Activated CD8-positive, alpha-beta T cell treated with anti-CD3 and anti-CD28 coated beads for 36 hours (primary cell): ENCODE measurements at regions of chr1 and their contacts with region 1.

Region 1: DNA sequence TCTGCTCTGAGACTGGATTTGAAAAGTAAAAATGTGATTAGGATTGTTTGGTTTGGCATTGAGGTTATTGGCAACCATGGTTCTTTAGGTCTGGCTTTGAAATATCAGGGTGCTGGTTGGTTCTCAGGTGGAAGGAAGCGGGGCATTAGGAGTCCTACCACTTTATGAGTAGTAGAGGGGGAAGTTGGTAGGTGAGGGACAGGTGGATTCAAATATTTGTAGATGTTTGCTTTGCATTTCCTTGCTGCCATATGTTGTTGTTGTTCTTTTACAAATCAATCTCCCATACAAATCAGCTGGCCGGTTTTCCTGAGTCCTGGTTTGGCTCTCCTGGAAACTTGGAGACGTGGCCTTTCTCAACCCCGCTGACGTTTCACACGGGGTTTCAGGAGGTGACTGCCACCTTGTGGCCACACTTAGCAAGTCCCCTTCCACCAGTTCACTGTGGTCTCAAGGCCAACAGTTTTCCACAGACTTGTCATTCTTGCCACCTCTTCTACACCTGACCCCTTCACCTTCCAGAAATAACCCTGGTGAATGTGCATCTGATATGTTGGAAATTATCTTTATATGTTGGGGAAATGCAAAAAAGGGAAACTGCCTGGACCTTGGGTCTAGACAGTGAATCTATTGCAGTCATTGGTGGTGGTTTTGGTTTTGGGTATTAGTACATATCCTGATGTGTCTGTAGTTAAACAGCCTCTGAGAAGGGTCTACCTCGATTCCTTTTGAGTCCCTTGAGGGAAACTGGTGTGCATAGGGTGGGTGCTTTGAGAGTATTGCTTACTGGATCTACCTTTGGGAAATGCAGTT is 127.0 kb upstream of the KIAA0040 start:
- DNase-seq: peak; percentile 76
- ATAC-seq: peak; percentile 90
- H3K4me3 Mint-ChIP-seq: no peak overlapping the region
- H3K27ac Mint-ChIP-seq: no peak overlapping the region
- H3K4me1 Mint-ChIP-seq: peaks cover 15% of the 10 kb centered on the region
- H3K27me3 Mint-ChIP-seq: no peaks in the 10 kb centered on the region
- CTCF ChIP-seq: peak; percentile 76

Region 2: GRCh38 chr1:175146529-175147213 is 173.0 kb before region 1 on chr1:
- CTCF ChIA-PET with region 1: interaction called, 408 read pairs
- POLR2A ChIA-PET with region 1: no interaction called
- intact Hi-C with region 1: no loop called
- DNase-seq: peak; percentile 84
- ATAC-seq: peak; percentile 96
- H3K4me3 Mint-ChIP-seq: no peak overlapping the region
- H3K27ac Mint-ChIP-seq: no peak overlapping the region
- H3K4me1 Mint-ChIP-seq: peaks cover 2% of the 10 kb centered on the region
- H3K27me3 Mint-ChIP-seq: peaks cover 13% of the 10 kb centered on the region
- CTCF ChIP-seq: peak; percentile 86

Region 3: GRCh38 chr1:175192630-175193526 is 126.7 kb before region 1 on chr1 and contains the start of gene KIAA0040:
- CTCF ChIA-PET with region 1: interaction called, 64 read pairs
- POLR2A ChIA-PET with region 1: interaction called, 3 read pairs
- intact Hi-C with region 1: no loop called
- DNase-seq: peak; percentile 66
- ATAC-seq: peak; percentile 64
- H3K4me3 Mint-ChIP-seq: peak within 1 kb of the TSS; percentile 96
- H3K27ac Mint-ChIP-seq: peak within 1 kb of the TSS; percentile 92
- H3K4me1 Mint-ChIP-seq: peaks cover 46% of the 10 kb centered on the region
- H3K27me3 Mint-ChIP-seq: no peaks in the 10 kb centered on the region
- CTCF ChIP-seq: no peak
- total RNA-seq, gene KIAA0040: 20.8 to 21.1 TPM

Region 4: GRCh38 chr1:175216444-175216843 is 103.2 kb before region 1 on chr1:
- CTCF ChIA-PET with region 1: interaction called, 18 read pairs
- POLR2A ChIA-PET with region 1: no interaction called
- intact Hi-C with region 1: no loop called
- DNase-seq: no peak
- ATAC-seq: no peak
- H3K4me3 Mint-ChIP-seq: no peak overlapping the region
- H3K27ac Mint-ChIP-seq: no peak overlapping the region
- H3K4me1 Mint-ChIP-seq: peaks cover 19% of the 10 kb centered on the region
- H3K27me3 Mint-ChIP-seq: no peaks in the 10 kb centered on the region
- CTCF ChIP-seq: no peak

Region 5: GRCh38 chr1:175307160-175307559 is 12.5 kb before region 1 on chr1:
- CTCF ChIA-PET with region 1: interaction called, 29 read pairs
- POLR2A ChIA-PET with region 1: interaction called, 3 read pairs
- intact Hi-C with region 1: no loop called
- DNase-seq: no peak
- ATAC-seq: no peak
- H3K4me3 Mint-ChIP-seq: no peak overlapping the region
- H3K27ac Mint-ChIP-seq: no peak overlapping the region
- H3K4me1 Mint-ChIP-seq: no peaks in the 10 kb centered on the region
- H3K27me3 Mint-ChIP-seq: no peaks in the 10 kb centered on the region
- CTCF ChIP-seq: no peak

Region 6: GRCh38 chr1:175338387-175339135 is 18.9 kb after region 1 on chr1:
- CTCF ChIA-PET with region 1: interaction called, 12 read pairs
- POLR2A ChIA-PET with region 1: no interaction called
- intact Hi-C with region 1: no loop called
- DNase-seq: peak; percentile 79
- ATAC-seq: peak; percentile 100
- H3K4me3 Mint-ChIP-seq: no peak overlapping the region
- H3K27ac Mint-ChIP-seq: no peak overlapping the region
- H3K4me1 Mint-ChIP-seq: peaks cover 4% of the 10 kb centered on the region
- H3K27me3 Mint-ChIP-seq: peaks cover 16% of the 10 kb centered on the region
- CTCF ChIP-seq: peak; percentile 80